Psoas muscle (tissue), 8 donors: ENCODE measurements at regions of chr6 and their contacts with region 1.

Region 1: GRCh38 chr6:37059344-37060206 is 54.1 kb downstream of the FGD2 start:
- DNase-seq: peak; percentile 75 to 80
- ATAC-seq: peak; percentile 46 to 76 (median 70)
- H3K4me3 ChIP-seq: no peak overlapping the region
- H3K27ac ChIP-seq: peak overlapping the region; percentile 84
- H3K4me1 ChIP-seq: peaks cover 37% of the 10 kb centered on the region
- H3K27me3 ChIP-seq: no peaks in the 10 kb centered on the region
- CTCF ChIP-seq: peak; percentile 32

Region 2: DNA sequence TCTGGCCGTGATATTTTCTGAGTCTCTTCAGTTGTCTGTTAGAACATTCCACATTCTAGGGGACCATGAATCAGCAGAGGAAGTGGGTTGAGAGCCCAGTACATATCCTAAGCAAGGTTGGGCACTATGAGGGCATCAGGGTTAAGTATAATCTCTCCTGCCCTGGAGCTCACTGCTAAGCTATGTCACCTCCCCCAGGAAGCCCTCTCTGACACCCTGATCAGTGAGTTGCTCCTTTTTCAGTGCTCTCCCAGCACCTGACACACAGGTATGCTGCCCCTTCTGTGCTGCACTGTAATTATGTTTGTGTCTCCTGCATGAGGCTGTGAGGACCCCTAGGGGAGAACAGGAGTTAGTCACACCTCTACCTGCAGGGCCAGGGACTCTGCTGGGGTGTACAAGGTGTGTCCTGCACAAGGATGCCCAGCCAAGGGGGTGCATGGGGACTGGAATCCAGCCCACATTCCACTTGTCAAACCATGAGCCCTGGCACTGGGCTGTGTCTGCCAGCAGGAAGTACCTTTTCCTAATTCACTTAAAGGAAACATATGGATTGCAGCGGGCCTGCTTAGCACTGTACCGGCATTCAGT is 358.1 kb before region 1 on chr6:
- intact Hi-C with region 1: no loop called
- DNase-seq: peak in 1 of 2 donors; percentile 11
- ATAC-seq: peak in 1 of 4 donors; percentile 34
- H3K4me3 ChIP-seq: no peak overlapping the region
- H3K27ac ChIP-seq: no peak overlapping the region
- H3K4me1 ChIP-seq: no peaks in the 10 kb centered on the region
- H3K27me3 ChIP-seq: no peaks in the 10 kb centered on the region
- CTCF ChIP-seq: no peak

Region 3: DNA sequence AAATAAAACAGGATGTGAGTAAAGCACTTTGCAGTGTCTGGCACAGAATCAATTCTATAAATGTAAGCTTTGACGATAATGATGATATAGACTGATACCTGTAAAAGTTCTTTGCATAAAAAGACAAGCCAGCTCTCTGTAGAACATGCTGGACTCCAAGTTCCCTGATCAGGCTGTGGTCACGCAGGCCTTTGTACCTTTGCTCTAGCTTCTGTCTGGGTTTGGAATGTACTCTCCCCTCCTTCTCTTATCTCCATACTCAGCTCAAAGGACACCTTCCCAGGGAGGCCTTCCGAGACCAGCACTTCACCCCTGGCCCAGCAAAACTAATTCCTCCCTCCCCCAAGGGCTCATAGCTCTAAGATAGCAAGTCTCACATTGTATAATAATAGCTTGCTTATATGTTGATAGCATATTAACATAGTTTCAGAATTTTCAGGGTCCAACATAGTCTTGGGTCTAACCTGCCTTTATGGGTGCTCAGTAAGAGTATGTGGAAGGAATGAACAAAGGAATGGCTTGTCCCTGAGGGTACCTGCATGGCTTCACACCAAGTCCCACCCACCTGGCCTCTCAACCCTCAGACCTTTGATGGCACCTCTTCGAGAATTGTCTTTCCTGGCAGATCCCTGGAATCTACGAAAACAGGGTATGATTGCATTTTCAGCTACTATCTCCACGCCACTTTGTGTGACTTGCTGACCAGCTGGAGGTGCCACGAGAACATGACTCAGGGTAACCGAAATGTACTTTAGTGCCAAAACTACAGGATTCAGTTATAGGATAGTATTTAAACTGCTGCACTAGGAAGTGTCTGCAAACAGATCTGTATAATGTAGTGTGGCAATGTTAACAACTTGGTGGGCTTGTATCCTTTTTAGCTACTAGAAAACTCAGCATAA is 68.6 kb after region 1 on chr6:
- intact Hi-C with region 1: loop called in 1 of 2 experiments (anchors 2 kb)
- DNase-seq: no peak
- ATAC-seq: peak in 1 of 4 donors; percentile 35
- H3K4me3 ChIP-seq: no peak overlapping the region
- H3K27ac ChIP-seq: peak overlapping the region; percentile 98
- H3K4me1 ChIP-seq: peaks cover 39% of the 10 kb centered on the region
- H3K27me3 ChIP-seq: no peaks in the 10 kb centered on the region
- CTCF ChIP-seq: no peak

Region 4: DNA sequence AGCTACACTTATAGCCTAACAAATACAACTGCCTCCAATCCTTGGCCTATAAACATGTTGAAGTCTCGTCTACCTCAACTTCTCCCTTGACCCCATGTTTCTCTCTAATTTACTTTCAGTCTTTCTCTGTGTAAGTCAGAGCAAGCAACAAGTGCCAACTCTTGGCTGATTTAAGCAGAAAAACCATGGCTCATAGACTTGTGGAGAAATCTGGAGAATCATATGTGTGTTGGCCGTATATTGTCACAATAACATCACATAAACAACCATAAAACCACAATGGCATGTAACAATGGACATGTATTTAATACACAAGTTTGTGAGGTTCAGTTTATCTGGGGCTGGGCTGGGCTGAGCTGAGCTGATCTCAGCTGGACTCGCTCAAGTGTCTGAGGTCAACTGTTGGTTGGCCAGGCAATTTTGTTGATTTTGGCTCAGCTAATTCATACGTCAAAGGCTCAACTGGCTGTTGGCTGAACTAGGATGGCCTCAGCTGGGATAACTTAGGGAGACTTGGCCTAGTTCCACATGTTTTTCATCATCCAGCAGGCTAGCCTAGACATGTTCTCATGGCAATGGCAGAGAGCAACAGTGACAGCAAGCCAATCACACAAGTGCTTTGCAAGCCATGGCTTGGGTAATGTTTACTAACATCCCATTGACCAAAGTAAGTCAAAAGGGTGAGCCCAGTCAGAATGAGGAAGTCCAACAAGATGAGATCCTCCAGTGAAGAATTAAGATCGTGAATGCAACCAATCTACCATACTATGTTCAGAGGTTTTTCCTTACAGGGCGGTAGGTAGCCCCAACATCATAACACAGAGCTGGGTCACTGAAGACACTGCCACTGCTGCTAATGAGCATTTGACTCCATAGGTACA is 185.1 kb after region 1 on chr6:
- intact Hi-C with region 1: no loop called
- DNase-seq: peak; percentile 62 to 73
- ATAC-seq: peak; percentile 79 to 90 (median 86)
- H3K4me3 ChIP-seq: peak overlapping the region; percentile 7
- H3K27ac ChIP-seq: peak overlapping the region; percentile 88
- H3K4me1 ChIP-seq: peaks cover 49% of the 10 kb centered on the region
- H3K27me3 ChIP-seq: no peaks in the 10 kb centered on the region
- CTCF ChIP-seq: no peak

Region 5: DNA sequence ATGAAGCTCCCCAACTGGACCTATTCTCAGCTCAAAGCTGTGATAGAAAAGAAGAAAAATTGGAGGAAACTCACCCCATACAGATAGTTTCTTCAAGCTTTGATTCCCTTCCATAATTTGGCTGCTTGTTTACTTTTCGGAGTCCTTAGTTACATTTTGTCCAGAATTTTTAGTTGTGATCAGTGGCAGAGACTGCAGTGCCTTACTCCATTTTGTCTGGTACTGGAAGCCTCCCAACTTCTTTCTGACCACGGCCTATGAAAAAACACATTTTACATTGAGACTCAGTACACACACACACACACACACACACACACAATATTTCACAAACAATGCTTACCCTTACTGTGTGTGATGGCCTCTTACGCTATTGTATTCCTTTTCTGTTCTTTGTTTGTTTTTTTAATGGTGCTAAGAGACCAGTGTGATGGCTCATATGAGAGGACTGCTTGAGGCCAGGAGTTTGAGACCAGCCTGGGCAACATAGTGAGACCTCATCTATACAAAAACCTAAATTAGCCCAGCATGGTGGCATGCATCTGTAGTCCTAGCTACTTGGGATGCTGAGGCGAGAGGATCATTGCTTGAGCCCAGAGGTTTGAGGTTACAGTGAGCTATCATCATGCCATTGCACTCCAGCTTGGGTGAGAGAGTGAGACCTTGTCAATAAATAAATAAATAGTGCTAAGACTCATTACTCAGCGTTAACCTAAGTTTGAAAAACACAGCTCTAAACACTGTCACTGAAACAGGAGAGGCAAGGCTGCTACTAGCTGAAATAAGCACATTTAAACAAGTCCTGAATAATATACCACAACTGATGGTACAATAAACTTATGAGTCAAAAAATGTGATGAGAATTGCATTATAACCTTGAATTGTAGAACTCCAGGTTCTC is 280.4 kb after region 1 on chr6:
- intact Hi-C with region 1: no loop called
- DNase-seq: no peak
- ATAC-seq: no peak
- H3K4me3 ChIP-seq: no peak overlapping the region
- H3K27ac ChIP-seq: no peak overlapping the region
- H3K4me1 ChIP-seq: no peaks in the 10 kb centered on the region
- H3K27me3 ChIP-seq: no peaks in the 10 kb centered on the region
- CTCF ChIP-seq: no peak